A673 (cell line): ENCODE measurements at regions of chr12 and their contacts with region 1.

Region 1: GRCh38 chr12:65609359-65609771 is 214.9 kb upstream of the HMGA2 start:
- DNase-seq: peak; percentile 62
- H3K4me3 ChIP-seq: no peak overlapping the region
- H3K27ac ChIP-seq: no peak overlapping the region
- H3K4me1 ChIP-seq: peaks cover 32% of the 10 kb centered on the region
- H3K27me3 ChIP-seq: no peaks in the 10 kb centered on the region
- CTCF ChIP-seq: 0 out of 2 replicates have a peak, but pooled peaks have one; percentile 20

Region 2: DNA sequence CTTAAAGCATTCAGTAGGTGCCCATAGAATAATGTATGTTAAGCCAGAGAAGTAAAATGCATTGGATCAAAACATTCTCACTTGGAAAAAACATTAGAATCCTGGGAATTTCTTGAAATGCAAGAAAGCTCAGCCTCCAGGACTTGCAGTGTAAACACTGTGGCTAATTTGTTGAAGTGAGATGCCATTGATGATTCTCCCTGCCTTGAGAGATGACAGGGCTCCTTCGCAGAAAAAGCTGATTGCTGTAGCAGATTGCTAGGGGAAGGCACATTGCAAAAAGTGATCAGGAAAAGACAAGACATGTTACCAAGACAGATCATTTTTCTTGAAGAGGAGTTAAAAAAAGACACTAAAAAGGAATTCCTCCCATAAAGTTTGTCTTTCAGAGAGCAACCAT is 10.7 kb after region 1 on chr12:
- CTCF ChIA-PET with region 1: no interaction called
- POLR2A ChIA-PET with region 1: no interaction called
- intact Hi-C with region 1: no loop called
- DNase-seq: no peak
- H3K4me3 ChIP-seq: no peak overlapping the region
- H3K27ac ChIP-seq: no peak overlapping the region
- H3K4me1 ChIP-seq: peaks cover 8% of the 10 kb centered on the region
- H3K27me3 ChIP-seq: no peaks in the 10 kb centered on the region
- CTCF ChIP-seq: no peak

Region 3: DNA sequence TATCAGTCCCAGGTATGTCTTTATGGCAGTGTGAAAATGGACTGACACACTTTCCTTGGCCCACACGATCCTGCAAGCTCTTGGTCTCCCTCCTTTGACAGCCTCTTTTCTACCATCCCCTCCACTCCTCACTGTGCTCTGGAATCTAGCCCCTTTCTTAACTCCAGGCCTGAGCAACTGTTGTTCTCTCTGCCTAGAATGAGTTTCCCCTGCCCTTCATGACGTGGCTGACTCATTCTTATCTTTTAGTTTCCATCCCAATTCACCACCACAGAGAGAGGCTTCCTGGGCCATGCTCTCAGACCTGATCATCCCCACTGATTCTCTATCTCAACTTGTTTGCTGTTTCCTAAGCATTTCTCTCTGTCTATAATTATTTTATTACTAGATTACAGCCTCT is 57.5 kb after region 1 on chr12:
- CTCF ChIA-PET with region 1: no interaction called
- POLR2A ChIA-PET with region 1: no interaction called
- intact Hi-C with region 1: loop called (anchors 5 kb)
- DNase-seq: no peak
- H3K4me3 ChIP-seq: no peak overlapping the region
- H3K27ac ChIP-seq: no peak overlapping the region
- H3K4me1 ChIP-seq: no peaks in the 10 kb centered on the region
- H3K27me3 ChIP-seq: no peaks in the 10 kb centered on the region
- CTCF ChIP-seq: no peak